Mammary epithelial cell (primary cell): ENCODE measurements at regions of chr20 and their contacts with region 1.

Region 1: DNA sequence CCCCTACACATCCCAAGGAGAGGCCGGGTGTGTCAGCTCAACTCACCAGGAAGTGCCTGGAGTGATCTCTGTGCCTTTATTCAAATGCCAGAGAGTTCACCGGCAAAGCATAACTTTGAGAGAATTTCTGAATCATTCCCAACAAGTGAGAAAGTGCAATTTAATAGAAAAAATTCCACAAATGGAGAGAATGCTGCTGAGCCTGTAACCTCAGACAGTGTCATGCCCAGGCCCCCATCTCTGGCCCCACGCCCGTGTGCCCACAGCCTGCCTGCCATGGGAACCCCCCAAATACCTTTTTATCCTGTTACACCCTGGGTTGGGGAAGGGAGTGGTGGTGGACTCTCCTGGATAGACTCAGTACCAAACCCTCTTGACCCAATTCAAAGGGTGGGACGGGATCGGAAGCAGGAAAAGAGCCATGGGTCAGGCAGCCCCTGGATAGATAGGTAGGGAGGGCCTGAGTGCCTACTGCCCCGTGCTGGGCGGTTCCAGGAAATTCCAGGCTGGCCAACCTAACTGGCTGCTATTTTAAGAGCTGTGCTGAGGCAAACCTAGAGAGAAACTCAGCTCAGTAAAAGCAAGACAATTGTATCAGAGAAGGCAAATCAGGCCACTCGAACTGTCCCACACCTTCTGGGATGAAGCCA is 179.0 kb upstream of the FOXA2 start:
- DNase-seq: peak; percentile 91
- H3K4me3 ChIP-seq: peak overlapping the region in 2 of 3 experiments; percentile 8 to 36
- H3K27ac ChIP-seq: peak overlapping the region; percentile 98
- H3K4me1 ChIP-seq: peaks cover 44% of the 10 kb centered on the region
- H3K27me3 ChIP-seq: no peaks in the 10 kb centered on the region
- CTCF ChIP-seq: no peak

Region 2: GRCh38 chr20:22127587-22127986 is 635.8 kb before region 1 on chr20:
- CTCF ChIA-PET with region 1: no interaction called
- dilution Hi-C with region 1: no loop called
- in situ Hi-C with region 1: no loop called
- intact Hi-C with region 1: no loop called
- DNase-seq: no peak
- H3K4me3 ChIP-seq: no peak overlapping the region
- H3K27ac ChIP-seq: no peak overlapping the region
- H3K4me1 ChIP-seq: no peaks in the 10 kb centered on the region
- H3K27me3 ChIP-seq: no peaks in the 10 kb centered on the region
- CTCF ChIP-seq: no peak

Region 3: GRCh38 chr20:22371843-22372242 is 391.5 kb before region 1 on chr20:
- CTCF ChIA-PET with region 1: no interaction called
- dilution Hi-C with region 1: no loop called
- in situ Hi-C with region 1: no loop called
- intact Hi-C with region 1: loop called (anchors 10 kb)
- DNase-seq: no peak
- H3K4me3 ChIP-seq: no peak overlapping the region
- H3K27ac ChIP-seq: no peak overlapping the region
- H3K4me1 ChIP-seq: peaks cover 34% of the 10 kb centered on the region
- H3K27me3 ChIP-seq: no peaks in the 10 kb centered on the region
- CTCF ChIP-seq: no peak

Region 4: GRCh38 chr20:22729180-22729579 is 34.2 kb before region 1 on chr20:
- CTCF ChIA-PET with region 1: interaction called, 3 read pairs
- dilution Hi-C with region 1: loop called (anchors 5 kb)
- in situ Hi-C with region 1: no loop called
- intact Hi-C with region 1: loop called (anchors 2 kb)
- DNase-seq: peak; percentile 35
- H3K4me3 ChIP-seq: no peak overlapping the region
- H3K27ac ChIP-seq: no peak overlapping the region
- H3K4me1 ChIP-seq: peaks cover 13% of the 10 kb centered on the region
- H3K27me3 ChIP-seq: no peaks in the 10 kb centered on the region
- CTCF ChIP-seq: no peak

Region 5: DNA sequence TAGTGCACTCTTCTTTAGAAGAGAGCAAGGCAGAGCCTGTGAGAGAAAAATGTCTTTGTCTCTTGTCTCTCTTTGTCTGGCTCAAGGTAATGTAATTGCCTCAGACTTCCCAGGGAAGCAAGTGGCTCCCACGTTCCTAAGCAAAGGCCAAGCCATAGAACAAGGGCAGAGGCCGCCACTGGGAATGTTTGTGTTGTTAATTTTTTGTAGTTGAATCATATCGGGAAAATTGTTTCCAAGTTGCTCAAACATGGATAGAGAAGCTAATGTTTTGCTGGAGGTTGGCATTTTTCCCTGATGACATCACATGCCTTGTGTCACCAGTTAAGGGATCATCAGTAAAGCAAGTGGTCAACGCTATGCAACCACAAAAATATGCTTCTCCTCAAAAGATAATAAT is 32.5 kb after region 1 on chr20:
- CTCF ChIA-PET with region 1: no interaction called
- dilution Hi-C with region 1: no loop called
- in situ Hi-C with region 1: no loop called
- intact Hi-C with region 1: loop called (anchors 1 kb)
- DNase-seq: peak; percentile 87
- H3K4me3 ChIP-seq: no peak overlapping the region
- H3K27ac ChIP-seq: peak overlapping the region; percentile 68
- H3K4me1 ChIP-seq: peaks cover 66% of the 10 kb centered on the region
- H3K27me3 ChIP-seq: no peaks in the 10 kb centered on the region
- CTCF ChIP-seq: no peak

Region 6: DNA sequence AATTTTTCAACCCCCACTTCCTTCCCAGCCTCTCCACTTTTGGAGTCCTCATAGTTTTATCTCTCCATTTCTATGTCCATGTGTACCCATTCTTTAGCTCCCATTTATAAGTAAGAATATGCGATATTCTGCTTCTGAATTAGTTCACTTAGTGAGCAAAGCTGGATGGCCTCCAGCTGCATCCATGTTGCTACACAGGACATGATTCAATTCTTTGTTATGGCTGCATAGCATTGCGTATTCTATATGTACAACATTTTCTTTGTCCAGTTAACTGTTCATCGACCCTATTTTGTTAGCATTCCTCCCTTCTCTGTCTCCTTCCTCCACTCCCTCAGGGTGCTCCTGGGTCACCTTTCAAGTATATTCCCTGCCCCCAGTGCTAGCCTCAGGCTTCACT is 61.7 kb after region 1 on chr20:
- CTCF ChIA-PET with region 1: no interaction called
- dilution Hi-C with region 1: no loop called
- in situ Hi-C with region 1: no loop called
- intact Hi-C with region 1: loop called (anchors 1 kb)
- DNase-seq: peak; percentile 49
- H3K4me3 ChIP-seq: no peak overlapping the region
- H3K27ac ChIP-seq: peak overlapping the region; percentile 38
- H3K4me1 ChIP-seq: peaks cover 56% of the 10 kb centered on the region
- H3K27me3 ChIP-seq: no peaks in the 10 kb centered on the region
- CTCF ChIP-seq: no peak